T-cell (primary cell): ENCODE measurements at regions of chr15 and their contacts with region 1.

Region 1: DNA sequence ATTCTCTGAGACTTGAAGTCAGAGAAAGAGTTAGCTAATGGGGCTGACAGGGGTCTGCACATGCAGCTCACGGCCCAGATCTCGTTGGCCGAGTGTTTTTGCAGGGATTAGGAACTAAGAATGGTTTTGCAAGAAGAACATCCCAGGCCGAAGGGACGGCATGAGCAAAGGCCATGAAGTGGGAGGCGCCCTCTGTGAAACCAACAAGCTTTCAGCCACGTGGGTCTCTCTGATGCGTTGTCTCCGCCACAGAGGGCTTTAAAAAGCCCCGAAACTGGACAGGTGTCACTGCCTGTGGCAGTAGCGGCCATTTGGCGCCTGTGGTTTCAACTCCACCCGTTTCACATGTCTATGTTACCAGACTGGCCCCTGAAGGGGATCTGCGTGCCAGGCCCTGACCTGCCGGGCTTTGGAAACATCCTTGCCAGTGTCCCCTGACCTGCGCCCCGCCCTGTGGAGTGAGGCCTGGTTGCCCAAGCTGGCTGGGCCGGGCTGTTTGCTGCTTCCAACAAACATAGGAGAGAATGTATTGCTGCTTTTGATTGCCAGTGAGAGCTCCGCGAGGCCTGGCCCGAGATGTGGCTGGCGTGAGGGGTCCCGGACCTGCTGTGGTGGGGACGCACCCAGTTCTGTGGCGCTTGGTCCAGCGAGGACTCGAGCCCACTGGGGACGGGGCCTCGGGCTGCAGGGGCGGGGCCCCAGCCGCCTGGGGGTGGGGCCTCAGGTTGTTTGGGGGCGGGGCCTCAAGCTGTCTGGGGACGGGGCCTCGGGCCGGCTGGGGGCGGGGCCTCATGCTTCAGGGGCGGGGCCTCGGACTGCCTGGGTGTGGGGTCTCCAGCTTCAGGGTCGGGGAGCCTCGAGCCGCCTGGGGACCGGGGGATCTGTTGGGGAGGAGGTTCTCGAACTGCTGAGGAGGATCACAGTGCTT is 30.4 kb downstream of the GOLGA6L2 start:
- DNase-seq: peak in 1 of 35 experiments; percentile 1
- ATAC-seq: no peak
- H3K4me3 ChIP-seq: no peak overlapping the region
- H3K4me3 Mint-ChIP-seq: no peak overlapping the region
- H3K27ac ChIP-seq: no peak overlapping the region
- H3K27ac Mint-ChIP-seq: no peak overlapping the region
- H3K4me1 ChIP-seq: no peaks in the 10 kb centered on the region
- H3K4me1 Mint-ChIP-seq: no peaks in the 10 kb centered on the region
- H3K27me3 ChIP-seq: peaks cover 0 to 2% of the 10 kb centered on the region in 2 experiments
- H3K27me3 Mint-ChIP-seq: no peaks in the 10 kb centered on the region

Region 2: GRCh38 chr15:22262613-22263020 is 1154.0 kb before region 1 on chr15:
- CTCF ChIA-PET with region 1: no interaction called
- POLR2A ChIA-PET with region 1: interaction called in 1 of 2 experiments, 11 read pairs
- DNase-seq: peak in 23 of 35 experiments; percentile 23 to 62 (median 38)
- ATAC-seq: peak in 3 of 4 experiments; percentile 32 to 49 (median 38)
- H3K4me3 ChIP-seq: peak overlapping the region in 1 of 2 donors; percentile 16
- H3K4me3 Mint-ChIP-seq: no peak overlapping the region
- H3K27ac ChIP-seq: peak overlapping the region; percentile 68
- H3K27ac Mint-ChIP-seq: no peak overlapping the region
- H3K4me1 ChIP-seq: peaks cover 20 to 59% of the 10 kb centered on the region in 2 experiments
- H3K4me1 Mint-ChIP-seq: peaks cover 21 to 25% (median 23%) of the 10 kb centered on the region in 3 donors
- H3K27me3 ChIP-seq: peaks cover 2 to 19% of the 10 kb centered on the region in 2 experiments
- H3K27me3 Mint-ChIP-seq: peaks cover 2 to 8% of the 10 kb centered on the region in 2 donors